PC-9 (cell line): ENCODE measurements at regions of chr11 and their contacts with region 1.

Region 1: GRCh38 chr11:61747192-61747966 is 5.1 kb upstream of the MYRF start:
- DNase-seq: peak; percentile 65 to 86
- H3K4me3 ChIP-seq: no peak overlapping the region
- H3K27ac ChIP-seq: no peak overlapping the region
- H3K4me1 ChIP-seq: peaks cover 18% of the 10 kb centered on the region
- H3K27me3 ChIP-seq: no peaks in the 10 kb centered on the region
- CTCF ChIP-seq: peak; percentile 98

Region 2: DNA sequence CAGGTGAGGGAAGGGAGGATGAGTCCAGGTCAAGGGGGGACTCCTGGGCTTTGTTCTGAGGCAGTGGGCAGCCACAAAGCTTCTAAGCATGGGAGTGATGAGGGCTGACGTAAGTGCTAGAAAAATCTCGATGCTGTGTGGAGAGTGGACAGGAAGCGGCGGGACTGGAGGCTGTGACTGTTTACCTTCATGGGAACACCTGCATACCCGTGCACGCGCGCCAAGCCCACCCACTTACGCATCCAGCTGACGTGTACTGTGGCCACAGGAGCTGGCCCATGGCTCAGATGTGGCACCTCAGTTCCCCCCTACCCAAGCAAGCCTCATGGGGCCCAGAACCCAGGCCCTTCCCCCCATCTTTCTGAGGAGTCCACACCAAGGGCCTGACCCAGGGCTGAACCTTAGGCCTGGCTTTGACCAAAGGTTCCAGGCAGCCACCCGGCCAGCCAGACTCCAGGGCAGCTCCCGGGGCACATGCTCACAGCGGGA is 19.0 kb after region 1 on chr11:
- CTCF ChIA-PET with region 1: no interaction called
- POLR2A ChIA-PET with region 1: no interaction called
- intact Hi-C with region 1: no loop called
- DNase-seq: no peak
- H3K4me3 ChIP-seq: no peak overlapping the region
- H3K27ac ChIP-seq: no peak overlapping the region
- H3K4me1 ChIP-seq: no peaks in the 10 kb centered on the region
- H3K27me3 ChIP-seq: no peaks in the 10 kb centered on the region
- CTCF ChIP-seq: no peak

Region 3: GRCh38 chr11:61776551-61777075 is 29.2 kb after region 1 on chr11:
- CTCF ChIA-PET with region 1: interaction called, 3 read pairs
- POLR2A ChIA-PET with region 1: no interaction called
- intact Hi-C with region 1: loop called (anchors 1 kb)
- DNase-seq: peak; percentile 57 to 63
- H3K4me3 ChIP-seq: no peak overlapping the region
- H3K27ac ChIP-seq: no peak overlapping the region
- H3K4me1 ChIP-seq: peaks cover 6% of the 10 kb centered on the region
- H3K27me3 ChIP-seq: no peaks in the 10 kb centered on the region
- CTCF ChIP-seq: peak; percentile 93

Region 4: DNA sequence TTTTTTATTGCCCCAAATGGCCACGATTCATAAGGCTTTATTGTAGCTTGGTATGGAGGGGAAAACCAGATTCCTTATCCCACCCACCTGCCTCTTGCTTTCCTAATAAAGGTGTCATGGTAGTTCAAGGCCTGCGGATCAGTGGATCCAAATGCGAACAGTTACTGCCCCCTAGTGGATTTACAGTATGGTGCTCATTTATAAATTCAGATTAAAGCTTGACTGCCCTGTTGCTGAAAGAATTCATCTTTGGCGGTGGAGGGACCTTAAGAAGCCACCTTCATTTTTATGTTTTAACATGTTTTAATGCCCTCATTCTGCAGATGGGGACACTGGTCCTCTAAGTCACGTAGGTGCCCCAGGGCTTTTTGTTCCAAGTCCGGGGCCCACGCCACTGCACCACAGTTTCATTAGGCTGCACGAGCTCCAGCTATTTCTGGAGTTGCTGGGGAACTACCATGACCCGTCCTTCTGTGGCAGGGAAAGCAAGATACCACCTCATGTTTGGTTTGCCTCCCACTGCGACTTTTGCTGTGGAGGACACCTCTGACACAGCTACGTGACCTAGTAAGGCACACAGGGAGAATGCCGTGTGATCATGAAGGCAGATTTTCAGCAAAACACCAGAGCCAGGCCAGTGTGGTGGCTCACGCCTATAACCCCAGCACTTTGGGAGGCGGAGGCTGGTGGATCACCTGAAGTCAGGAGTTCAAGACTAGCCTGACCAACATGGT is 360.8 kb after region 1 on chr11:
- CTCF ChIA-PET with region 1: interaction called, 3 read pairs
- POLR2A ChIA-PET with region 1: no interaction called
- intact Hi-C with region 1: loop called (anchors 5 kb)
- DNase-seq: peak; percentile 44 to 53
- H3K4me3 ChIP-seq: no peak overlapping the region
- H3K27ac ChIP-seq: no peak overlapping the region
- H3K4me1 ChIP-seq: no peaks in the 10 kb centered on the region
- H3K27me3 ChIP-seq: no peaks in the 10 kb centered on the region
- CTCF ChIP-seq: peak; percentile 93